A673 (cell line): ENCODE measurements at regions of chr11 and their contacts with region 1.

Region 1: GRCh38 chr11:37006563-37006962 is 408.5 kb upstream of the RAG2 start:
- DNase-seq: no peak
- H3K4me3 ChIP-seq: no peak overlapping the region
- H3K27ac ChIP-seq: no peak overlapping the region
- H3K4me1 ChIP-seq: peaks cover 25% of the 10 kb centered on the region
- H3K27me3 ChIP-seq: no peaks in the 10 kb centered on the region
- CTCF ChIP-seq: no peak

Region 2: DNA sequence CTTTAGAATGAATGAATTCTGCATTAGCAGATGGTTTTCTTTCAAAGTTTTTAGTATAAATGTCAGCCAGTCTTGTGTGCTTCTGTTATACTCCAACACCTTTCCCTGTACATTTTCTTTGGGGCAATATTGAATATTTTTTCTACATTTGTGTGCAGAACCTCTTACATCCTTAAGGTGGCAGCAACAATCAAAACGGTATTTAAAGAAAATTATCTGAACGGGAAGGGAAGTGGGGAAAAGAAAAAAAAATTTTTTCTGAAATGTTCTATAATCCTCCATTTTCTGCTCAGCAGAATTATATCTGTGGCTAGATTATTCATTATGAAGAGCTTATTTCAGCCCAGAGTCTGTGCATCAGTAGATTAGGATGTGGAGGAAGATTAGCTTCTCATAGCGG is 61.2 kb before region 1 on chr11:
- CTCF ChIA-PET with region 1: interaction called, 4 read pairs
- POLR2A ChIA-PET with region 1: no interaction called
- intact Hi-C with region 1: loop called (anchors 1 kb)
- DNase-seq: peak; percentile 89
- H3K4me3 ChIP-seq: no peak overlapping the region
- H3K27ac ChIP-seq: no peak overlapping the region
- H3K4me1 ChIP-seq: peaks cover 48% of the 10 kb centered on the region
- H3K27me3 ChIP-seq: no peaks in the 10 kb centered on the region
- CTCF ChIP-seq: peak; percentile 97

Region 3: GRCh38 chr11:36974771-36975170 is 31.8 kb before region 1 on chr11:
- CTCF ChIA-PET with region 1: interaction called, 4 read pairs
- POLR2A ChIA-PET with region 1: interaction called, 4 read pairs
- intact Hi-C with region 1: loop called (anchors 2 kb)
- DNase-seq: peak; percentile 93
- H3K4me3 ChIP-seq: no peak overlapping the region
- H3K27ac ChIP-seq: peak overlapping the region; percentile 35
- H3K4me1 ChIP-seq: peaks cover 31% of the 10 kb centered on the region
- H3K27me3 ChIP-seq: no peaks in the 10 kb centered on the region
- CTCF ChIP-seq: no peak

Region 4: DNA sequence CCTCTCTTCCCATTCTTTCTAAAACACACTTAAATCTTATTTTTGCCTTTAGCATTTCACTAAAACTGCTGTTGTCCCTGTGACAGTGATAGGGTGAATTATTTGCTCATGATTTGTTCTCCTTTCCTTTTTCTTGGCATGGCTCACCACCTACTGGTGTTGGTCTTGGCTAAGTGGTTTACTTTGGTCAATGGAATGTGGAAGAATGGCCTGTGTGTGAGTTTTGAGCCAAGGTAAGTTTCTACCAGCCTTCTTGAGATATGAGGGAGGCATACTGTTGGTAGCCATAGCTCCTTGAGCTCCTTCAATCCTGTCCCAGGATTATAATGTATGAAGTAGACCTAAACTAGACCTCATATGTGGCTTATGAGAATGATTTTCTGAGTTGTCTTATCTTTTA is 97.8 kb after region 1 on chr11:
- CTCF ChIA-PET with region 1: interaction called, 10 read pairs
- POLR2A ChIA-PET with region 1: no interaction called
- intact Hi-C with region 1: loop called (anchors 2 kb)
- DNase-seq: no peak
- H3K4me3 ChIP-seq: no peak overlapping the region
- H3K27ac ChIP-seq: no peak overlapping the region
- H3K4me1 ChIP-seq: peaks cover 32% of the 10 kb centered on the region
- H3K27me3 ChIP-seq: no peaks in the 10 kb centered on the region
- CTCF ChIP-seq: no peak

Region 5: DNA sequence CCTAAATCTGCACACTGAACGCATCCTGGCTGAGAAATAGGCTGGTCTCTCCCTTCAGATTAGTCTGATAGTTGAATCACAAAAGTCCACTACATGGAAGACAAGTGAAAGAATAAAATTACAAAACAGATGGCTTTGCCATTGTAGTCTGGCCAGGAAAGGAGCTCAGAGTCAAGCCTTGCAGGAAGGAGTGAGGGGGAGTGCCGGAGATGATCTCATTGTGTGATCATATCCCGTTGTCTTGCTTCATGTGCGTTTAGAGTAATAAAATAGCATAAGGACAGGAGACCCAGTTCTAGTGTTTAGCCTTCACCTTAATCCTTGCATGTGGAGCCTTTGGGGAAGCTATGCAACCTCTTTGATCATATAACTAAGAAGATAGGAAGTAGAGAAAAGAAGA is 258.2 kb after region 1 on chr11:
- CTCF ChIA-PET with region 1: no interaction called
- POLR2A ChIA-PET with region 1: no interaction called
- intact Hi-C with region 1: loop called (anchors 5 kb)
- DNase-seq: peak; percentile 89
- H3K4me3 ChIP-seq: no peak overlapping the region
- H3K27ac ChIP-seq: peak overlapping the region; percentile 33
- H3K4me1 ChIP-seq: peaks cover 18% of the 10 kb centered on the region
- H3K27me3 ChIP-seq: no peaks in the 10 kb centered on the region
- CTCF ChIP-seq: no peak

Region 6: DNA sequence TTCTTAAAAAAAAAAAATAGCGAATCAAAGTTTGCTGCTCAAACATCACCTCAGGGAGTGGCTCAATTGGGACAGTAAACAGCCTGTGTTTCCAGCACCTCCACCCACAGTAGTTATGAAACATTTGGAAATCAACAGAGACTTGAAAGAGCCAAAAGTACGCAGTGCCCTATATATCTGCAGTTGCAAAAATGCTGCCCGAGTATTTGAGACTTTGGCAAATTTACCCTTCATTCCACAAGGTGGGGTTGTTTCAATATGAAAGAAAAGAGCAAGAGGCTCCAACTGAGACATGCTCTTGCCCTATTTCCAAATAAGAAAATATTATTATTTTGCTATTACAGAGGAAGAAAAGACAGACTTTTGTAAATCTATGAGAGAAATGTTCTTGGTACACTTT is 442.6 kb after region 1 on chr11:
- CTCF ChIA-PET with region 1: no interaction called
- POLR2A ChIA-PET with region 1: no interaction called
- intact Hi-C with region 1: loop called (anchors 2 kb)
- DNase-seq: peak; percentile 94
- H3K4me3 ChIP-seq: no peak overlapping the region
- H3K27ac ChIP-seq: no peak overlapping the region
- H3K4me1 ChIP-seq: peaks cover 50% of the 10 kb centered on the region
- H3K27me3 ChIP-seq: no peaks in the 10 kb centered on the region
- CTCF ChIP-seq: peak; percentile 92